Activated CD8-positive, alpha-beta memory T cell treated with anti-CD3 and anti-CD28 coated beads, Interleukin-2, amount 10 ng/mL, durations not matched to agents 7 days and 5 days (primary cell): ENCODE measurements at regions of chr5 and their contacts with region 1.

Region 1: GRCh38 chr5:40410231-40410861 is 269.4 kb upstream of the PTGER4 start:
- DNase-seq: peak; percentile 84
- ATAC-seq: peak; percentile 83
- H3K4me3 Mint-ChIP-seq: peak overlapping the region; percentile 66
- H3K27ac Mint-ChIP-seq: peak overlapping the region; percentile 93
- H3K4me1 Mint-ChIP-seq: peaks cover 53% of the 10 kb centered on the region
- H3K27me3 Mint-ChIP-seq: no peaks in the 10 kb centered on the region

Region 2: GRCh38 chr5:40258222-40258621 is 152.1 kb before region 1 on chr5:
- CTCF ChIA-PET with region 1: no interaction called
- DNase-seq: no peak
- ATAC-seq: peak; percentile 70
- H3K4me3 Mint-ChIP-seq: no peak overlapping the region
- H3K27ac Mint-ChIP-seq: peak overlapping the region; percentile 39
- H3K4me1 Mint-ChIP-seq: peaks cover 9% of the 10 kb centered on the region
- H3K27me3 Mint-ChIP-seq: no peaks in the 10 kb centered on the region

Region 3: GRCh38 chr5:40428126-40428525 is 17.8 kb after region 1 on chr5:
- CTCF ChIA-PET with region 1: interaction called, 25 read pairs
- DNase-seq: peak; percentile 57
- ATAC-seq: peak; percentile 38
- H3K4me3 Mint-ChIP-seq: no peak overlapping the region
- H3K27ac Mint-ChIP-seq: peak overlapping the region; percentile 89
- H3K4me1 Mint-ChIP-seq: peaks cover 43% of the 10 kb centered on the region
- H3K27me3 Mint-ChIP-seq: no peaks in the 10 kb centered on the region

Region 4: DNA sequence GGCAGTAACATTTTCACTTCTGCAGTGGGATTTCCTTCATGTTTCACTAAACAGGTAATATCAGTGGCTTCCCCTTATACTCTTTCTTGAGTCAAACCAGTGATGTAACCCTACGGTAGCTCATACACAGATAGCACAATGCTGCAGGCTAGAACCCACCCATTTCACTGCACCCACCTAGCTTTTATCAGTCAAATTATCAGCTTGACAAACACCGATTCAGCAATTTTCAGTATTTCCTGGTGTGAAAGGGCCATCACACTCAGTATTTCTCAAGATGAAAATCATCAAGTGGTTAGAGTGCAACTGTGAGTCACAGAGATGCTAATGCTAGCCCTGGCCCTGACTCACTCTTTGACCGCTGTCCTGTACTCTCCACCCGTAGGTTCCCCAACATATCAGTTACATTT is 27.1 kb after region 1 on chr5:
- CTCF ChIA-PET with region 1: interaction called, 25 read pairs
- DNase-seq: peak; percentile 74
- ATAC-seq: peak; percentile 77
- H3K4me3 Mint-ChIP-seq: peak overlapping the region; percentile 31
- H3K27ac Mint-ChIP-seq: peak overlapping the region; percentile 98
- H3K4me1 Mint-ChIP-seq: peaks cover 80% of the 10 kb centered on the region
- H3K27me3 Mint-ChIP-seq: no peaks in the 10 kb centered on the region